AG04449 (cell line): ENCODE measurements at regions of chr2 and their contacts with region 1.

Region 1: DNA sequence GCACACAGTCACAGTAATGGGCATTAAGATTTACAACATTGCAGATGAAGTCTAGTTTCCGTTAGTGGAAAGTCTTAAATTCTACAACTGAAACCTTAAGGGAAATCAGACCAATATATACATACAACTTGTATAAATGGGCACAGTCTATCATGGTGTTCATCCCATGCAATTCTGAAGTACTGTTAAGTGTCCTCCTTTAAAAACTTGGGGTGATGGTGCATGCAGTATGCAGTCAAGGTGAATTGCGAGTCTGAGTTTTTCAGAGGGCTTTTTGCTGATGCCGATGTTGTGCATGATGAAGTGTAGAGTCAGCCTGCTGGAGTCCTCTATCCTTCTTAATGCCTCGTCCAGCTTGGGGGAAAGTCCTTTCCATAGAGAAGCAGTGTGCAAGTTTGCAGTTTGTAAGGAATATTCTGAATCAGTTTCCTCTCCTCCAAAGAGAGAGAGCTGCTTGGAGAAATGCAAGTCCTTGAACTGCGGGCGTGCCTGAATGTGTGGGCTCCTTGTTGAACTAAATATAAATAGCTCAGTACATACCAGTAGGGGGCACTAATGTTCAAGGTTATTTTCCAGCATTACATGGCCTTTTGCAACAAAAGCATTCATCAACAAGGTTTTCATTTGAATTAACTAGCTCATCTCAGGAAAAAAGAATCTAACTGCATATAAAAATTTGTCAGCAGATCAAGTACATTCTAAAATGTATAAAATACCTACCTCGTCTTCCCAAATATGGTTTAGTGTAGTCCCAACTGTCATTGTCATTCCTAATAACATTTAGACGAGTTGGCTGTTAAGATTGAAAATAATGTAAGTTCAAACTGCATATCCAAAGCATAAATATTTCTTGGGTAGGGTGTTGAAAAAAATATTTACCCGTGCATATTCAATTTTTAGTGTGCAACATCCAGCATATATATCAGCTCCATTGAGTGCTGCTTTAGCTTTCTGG is 21.3 kb downstream of the HNRNPLL start:
- DNase-seq: peak; percentile 26
- H3K4me3 ChIP-seq: no peak overlapping the region
- CTCF ChIP-seq: peak; percentile 43

Region 2: GRCh38 chr2:38498045-38498481 is 83.4 kb before region 1 on chr2:
- CTCF ChIA-PET with region 1: no interaction called
- POLR2A ChIA-PET with region 1: no interaction called
- DNase-seq: no peak
- H3K4me3 ChIP-seq: no peak overlapping the region
- CTCF ChIP-seq: no peak

Region 3: GRCh38 chr2:38535744-38536506 is 45.5 kb before region 1 on chr2:
- CTCF ChIA-PET with region 1: interaction called, 14 read pairs
- POLR2A ChIA-PET with region 1: no interaction called
- DNase-seq: no peak
- H3K4me3 ChIP-seq: peak overlapping the region; percentile 66
- CTCF ChIP-seq: peak; percentile 94

Region 4: GRCh38 chr2:38561691-38562090 is 19.8 kb before region 1 on chr2:
- CTCF ChIA-PET with region 1: interaction called, 49 read pairs
- POLR2A ChIA-PET with region 1: no interaction called
- DNase-seq: no peak
- H3K4me3 ChIP-seq: no peak overlapping the region
- CTCF ChIP-seq: no peak

Region 5: DNA sequence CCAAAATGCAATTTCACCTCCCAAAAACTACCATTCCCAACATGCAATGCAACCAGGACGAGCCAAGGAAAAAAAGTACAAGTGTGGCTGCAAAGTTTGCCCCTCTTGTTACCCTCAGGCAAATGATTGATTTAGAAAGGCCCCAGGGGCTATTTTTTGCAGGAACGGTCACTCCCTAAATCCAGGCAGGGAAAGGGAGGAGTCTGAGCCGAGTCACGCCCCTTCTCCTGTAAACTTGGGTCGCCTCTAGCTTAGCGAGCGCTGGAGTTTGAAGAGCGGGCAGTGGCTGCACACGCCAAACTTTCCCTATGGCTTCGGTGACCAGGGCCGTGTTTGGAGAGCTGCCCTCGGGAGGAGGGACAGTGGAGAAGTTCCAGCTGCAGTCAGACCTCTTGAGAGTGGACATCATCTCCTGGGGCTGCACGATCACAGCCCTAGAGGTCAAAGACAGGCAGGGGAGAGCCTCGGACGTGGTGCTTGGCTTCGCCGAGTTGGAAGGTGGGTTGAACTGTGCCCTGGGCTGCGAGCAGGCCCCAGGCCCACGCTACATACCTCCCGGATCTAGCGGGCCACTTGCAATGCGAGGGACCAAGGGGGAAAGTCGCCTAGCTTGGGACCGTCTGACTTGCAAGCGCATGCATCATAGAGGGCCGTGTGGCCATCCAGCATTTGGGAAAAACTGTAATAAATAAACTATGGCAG is 84.5 kb after region 1 on chr2 and contains the start of gene GALM:
- CTCF ChIA-PET with region 1: interaction called, 16 read pairs
- POLR2A ChIA-PET with region 1: no interaction called
- DNase-seq: peak; percentile 47
- H3K4me3 ChIP-seq: peak within 1 kb of the TSS; percentile 58
- CTCF ChIP-seq: no peak

Region 6: GRCh38 chr2:38720613-38721241 is 139.3 kb after region 1 on chr2:
- CTCF ChIA-PET with region 1: interaction called, 321 read pairs
- POLR2A ChIA-PET with region 1: no interaction called
- DNase-seq: peak; percentile 59
- H3K4me3 ChIP-seq: no peak overlapping the region
- CTCF ChIP-seq: no peak

Region 7: DNA sequence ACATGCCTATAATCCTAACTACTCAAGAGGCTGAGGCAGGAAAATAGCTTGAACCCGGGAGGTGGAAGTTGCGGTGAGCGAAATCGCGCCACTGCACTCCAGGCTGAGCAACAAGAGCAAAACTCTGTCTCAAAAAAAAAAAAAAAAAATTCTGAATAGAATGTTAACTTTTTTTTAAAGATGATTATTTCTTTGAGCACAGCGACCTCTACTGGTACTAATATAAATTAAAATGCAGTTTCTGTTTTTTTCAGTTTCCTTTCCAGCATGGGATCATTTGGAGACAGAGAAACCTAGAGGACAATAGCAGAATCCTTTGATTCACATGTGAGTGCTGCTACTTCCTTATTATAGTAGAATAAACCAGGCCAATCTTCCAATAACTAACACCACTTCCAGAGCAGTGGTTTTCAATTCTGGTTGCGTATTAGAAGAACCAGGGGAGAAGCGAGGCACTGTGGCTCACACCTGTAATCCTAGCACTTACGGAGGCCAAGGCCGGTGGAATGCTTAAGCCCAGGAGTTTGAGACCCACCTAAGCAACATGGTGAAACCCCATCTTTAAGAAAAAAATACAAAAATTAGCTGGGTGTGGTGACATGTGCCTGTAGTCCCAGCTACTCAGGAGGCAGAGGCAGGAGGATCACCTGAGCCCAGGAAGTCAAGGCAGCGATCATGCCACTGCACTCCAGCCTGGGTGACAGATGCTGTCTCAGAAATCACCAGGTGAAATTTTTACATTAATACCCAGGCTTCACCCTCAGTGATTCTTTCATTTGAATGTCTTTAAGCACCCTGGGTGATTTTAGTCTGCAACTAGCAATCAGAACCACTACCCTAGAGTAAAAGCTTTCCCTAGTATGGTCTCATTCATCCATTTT is 159.6 kb after region 1 on chr2:
- CTCF ChIA-PET with region 1: interaction called, 40 read pairs
- POLR2A ChIA-PET with region 1: interaction called, 3 read pairs
- DNase-seq: no peak
- H3K4me3 ChIP-seq: no peak overlapping the region
- CTCF ChIP-seq: no peak